IMR-90 (cell line): ENCODE measurements at regions of chr11 and their contacts with region 1.

Region 1: GRCh38 chr11:96045622-96046456 is 121.9 kb upstream of the MTMR2 start:
- DNase-seq: peak; percentile 63
- ATAC-seq: peak; percentile 61
- H3K4me3 ChIP-seq: no peak overlapping the region
- H3K27ac ChIP-seq: peak overlapping the region; percentile 55
- H3K4me1 ChIP-seq: peaks cover 12% of the 10 kb centered on the region
- H3K27me3 ChIP-seq: no peaks in the 10 kb centered on the region
- CTCF ChIP-seq: peak; percentile 37; the same call in 1 of the 2 replicates
- POLR2A ChIP-seq: no peak
- RAD21 ChIP-seq: peak; percentile 43; the same call in 1 of the 2 replicates

Region 2: DNA sequence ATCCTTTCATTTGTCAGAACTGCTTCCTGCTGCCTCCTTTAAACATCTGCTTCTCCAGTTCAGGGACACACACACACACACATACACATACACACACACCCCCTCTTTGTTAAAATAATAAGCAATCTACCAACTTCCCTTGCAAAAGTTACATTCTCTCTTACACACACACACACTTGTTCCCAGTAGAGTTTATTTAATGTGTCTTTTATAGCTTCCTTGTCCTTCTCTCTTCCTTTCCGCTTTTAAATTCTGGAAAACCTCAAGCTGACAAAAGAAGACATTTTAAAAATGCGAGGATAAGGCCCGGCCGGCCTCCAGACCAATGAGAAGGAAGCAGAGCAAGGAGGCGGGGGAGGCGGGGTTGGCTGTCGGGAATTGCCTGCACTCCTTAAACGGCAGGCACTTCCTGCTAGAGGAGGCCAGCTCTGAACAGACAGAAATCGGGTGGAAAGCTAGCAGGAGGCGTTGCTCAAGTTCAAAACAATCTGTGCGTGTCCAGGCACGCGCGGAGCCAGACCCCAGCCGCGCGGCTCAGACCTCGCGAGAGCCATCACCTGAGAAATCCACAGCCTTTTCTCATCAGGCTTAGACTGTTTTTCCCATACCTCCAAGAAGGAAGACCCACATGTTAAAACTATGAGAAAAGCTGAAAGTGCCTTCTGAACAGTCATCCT is 197.3 kb after region 1 on chr11:
- CTCF ChIA-PET with region 1: no interaction called
- POLR2A ChIA-PET with region 1: interaction called, 15 read pairs
- dilution Hi-C with region 1: no loop called
- in situ Hi-C with region 1: no loop called
- intact Hi-C with region 1: no loop called
- DNase-seq: peak; percentile 98
- ATAC-seq: peak; percentile 98
- H3K4me3 ChIP-seq: peak overlapping the region; percentile 44
- H3K27ac ChIP-seq: peak overlapping the region; percentile 80
- H3K4me1 ChIP-seq: peaks cover 22% of the 10 kb centered on the region
- H3K27me3 ChIP-seq: no peaks in the 10 kb centered on the region
- CTCF ChIP-seq: no peak
- POLR2A ChIP-seq: no peak
- RAD21 ChIP-seq: no peak

Region 3: DNA sequence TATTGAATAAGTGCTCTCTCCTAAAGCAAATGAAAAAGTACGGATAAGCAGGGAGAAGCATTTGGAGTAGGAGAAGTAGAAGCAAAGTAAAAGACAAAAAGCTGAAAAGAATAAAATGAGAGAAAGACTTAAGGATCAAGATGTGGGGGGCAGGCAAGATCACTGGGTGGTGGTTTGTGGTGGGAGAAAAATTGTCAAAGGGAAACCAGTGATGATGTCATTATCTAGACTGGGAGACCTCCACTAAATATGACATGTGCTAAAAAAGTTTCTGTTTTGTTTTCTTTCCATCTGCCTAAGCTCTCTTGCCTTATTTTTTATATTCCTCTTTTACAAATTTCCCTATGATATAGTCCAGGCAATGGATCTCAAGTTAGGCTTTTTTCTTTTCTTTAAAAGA is 312.0 kb after region 1 on chr11:
- CTCF ChIA-PET with region 1: interaction called, 4 read pairs
- POLR2A ChIA-PET with region 1: no interaction called
- dilution Hi-C with region 1: loop called (anchors 25 kb)
- in situ Hi-C with region 1: no loop called
- intact Hi-C with region 1: no loop called
- DNase-seq: no peak
- ATAC-seq: no peak
- H3K4me3 ChIP-seq: no peak overlapping the region
- H3K27ac ChIP-seq: no peak overlapping the region
- H3K4me1 ChIP-seq: no peaks in the 10 kb centered on the region
- H3K27me3 ChIP-seq: no peaks in the 10 kb centered on the region
- CTCF ChIP-seq: no peak
- POLR2A ChIP-seq: no peak
- RAD21 ChIP-seq: no peak